Heart left ventricle (tissue), 16 donors: ENCODE measurements at regions of chr11 and their contacts with region 1.

Region 1: DNA sequence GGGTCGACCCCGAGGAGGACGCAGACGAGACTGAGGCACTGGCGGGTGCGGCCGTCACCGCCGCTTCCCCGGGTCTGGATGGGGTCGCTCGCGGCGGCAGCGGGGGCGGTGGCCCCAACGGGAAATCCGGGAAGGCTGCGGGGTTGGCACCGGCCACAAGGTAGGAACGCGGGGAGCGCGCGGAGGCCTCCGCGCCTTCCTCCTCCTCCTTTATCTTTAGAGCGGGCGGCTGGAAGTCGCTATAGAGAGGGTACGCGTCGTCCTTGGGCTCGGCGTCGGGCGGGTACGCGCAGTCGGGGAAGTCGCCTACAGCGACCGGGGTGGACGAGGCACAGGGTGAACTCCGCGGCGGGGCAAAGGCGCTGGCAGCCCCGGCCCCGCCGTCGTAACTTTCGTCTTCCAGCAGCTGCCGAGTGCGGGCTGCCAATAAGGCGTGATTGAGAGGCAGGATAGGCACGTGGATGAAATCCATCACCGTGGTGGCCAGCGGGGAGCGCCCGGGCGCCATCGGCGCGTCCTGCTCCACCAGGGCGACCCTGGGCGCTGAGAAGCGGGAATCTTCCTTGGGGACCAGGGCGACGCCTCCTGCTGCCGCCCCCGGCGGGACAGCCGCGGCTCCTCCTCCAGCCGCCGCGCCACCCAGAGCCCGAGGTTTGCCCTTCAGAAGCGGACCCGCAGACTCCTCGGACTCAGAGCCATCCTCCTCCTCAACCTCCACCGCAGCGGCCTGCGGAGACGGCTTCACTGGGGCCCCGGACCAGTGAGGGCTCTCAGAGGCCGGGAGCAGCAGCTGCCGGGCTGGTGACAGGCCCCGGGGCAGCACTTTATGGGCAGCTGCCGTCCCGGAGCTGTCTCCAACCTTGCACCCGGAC is 1.7 kb downstream of the PGR start:
- DNase-seq: peak; percentile 25 to 74 (median 54)
- ATAC-seq: peak in 3 of 4 donors; percentile 49 to 68 (median 64)
- H3K4me3 ChIP-seq: peak overlapping the region; percentile 49 to 94 (median 78)
- H3K27ac ChIP-seq: peak overlapping the region; percentile 70 to 89 (median 86)
- H3K4me1 ChIP-seq: peaks cover 0 to 31% (median 11%) of the 10 kb centered on the region in 12 donors
- H3K27me3 ChIP-seq: peaks cover 0 to 36% (median 0%) of the 10 kb centered on the region in 9 donors
- CTCF ChIP-seq: peak in 3 of 12 donors; percentile 7 to 24 (median 20)
- POLR2A ChIP-seq: no peak

Region 2: GRCh38 chr11:100827934-100828661 is 299.8 kb before region 1 on chr11:
- intact Hi-C with region 1: loop called in 1 of 10 experiments (anchors 5 kb)
- DNase-seq: no peak
- ATAC-seq: no peak
- H3K4me3 ChIP-seq: no peak overlapping the region
- H3K27ac ChIP-seq: no peak overlapping the region
- H3K4me1 ChIP-seq: peaks cover 0 to 50% (median 23%) of the 10 kb centered on the region in 12 donors
- H3K27me3 ChIP-seq: no peaks in the 10 kb centered on the region
- CTCF ChIP-seq: peak in 1 of 12 donors; percentile 4
- POLR2A ChIP-seq: no peak

Region 3: GRCh38 chr11:100970283-100971164 is 157.4 kb before region 1 on chr11:
- intact Hi-C with region 1: loop called in 2 of 10 experiments (anchors 10 kb)
- DNase-seq: peak in 2 of 5 donors; percentile 7 to 20
- ATAC-seq: peak; percentile 73 to 84 (median 77)
- H3K4me3 ChIP-seq: no peak overlapping the region
- H3K27ac ChIP-seq: peak overlapping the region in 8 of 12 donors; percentile 6 to 60 (median 47)
- H3K4me1 ChIP-seq: peaks cover 0 to 16% (median 4%) of the 10 kb centered on the region in 12 donors
- H3K27me3 ChIP-seq: no peaks in the 10 kb centered on the region
- CTCF ChIP-seq: no peak
- POLR2A ChIP-seq: no peak

Region 4: GRCh38 chr11:100980156-100980555 is 147.8 kb before region 1 on chr11:
- intact Hi-C with region 1: loop called in 3 of 10 experiments (anchors 5 to 10 kb)
- DNase-seq: no peak
- ATAC-seq: no peak
- H3K4me3 ChIP-seq: no peak overlapping the region
- H3K27ac ChIP-seq: no peak overlapping the region
- H3K4me1 ChIP-seq: no peaks in the 10 kb centered on the region
- H3K27me3 ChIP-seq: no peaks in the 10 kb centered on the region
- CTCF ChIP-seq: peak in 11 of 12 donors; percentile 18 to 67 (median 49)
- POLR2A ChIP-seq: no peak

Region 5: GRCh38 chr11:100991541-100991940 is 136.4 kb before region 1 on chr11:
- intact Hi-C with region 1: loop called in 2 of 10 experiments (anchors 10 kb)
- DNase-seq: no peak
- ATAC-seq: no peak
- H3K4me3 ChIP-seq: no peak overlapping the region
- H3K27ac ChIP-seq: no peak overlapping the region
- H3K4me1 ChIP-seq: peaks cover 0 to 10% (median 2%) of the 10 kb centered on the region in 12 donors
- H3K27me3 ChIP-seq: no peaks in the 10 kb centered on the region
- CTCF ChIP-seq: no peak
- POLR2A ChIP-seq: no peak

Region 6: DNA sequence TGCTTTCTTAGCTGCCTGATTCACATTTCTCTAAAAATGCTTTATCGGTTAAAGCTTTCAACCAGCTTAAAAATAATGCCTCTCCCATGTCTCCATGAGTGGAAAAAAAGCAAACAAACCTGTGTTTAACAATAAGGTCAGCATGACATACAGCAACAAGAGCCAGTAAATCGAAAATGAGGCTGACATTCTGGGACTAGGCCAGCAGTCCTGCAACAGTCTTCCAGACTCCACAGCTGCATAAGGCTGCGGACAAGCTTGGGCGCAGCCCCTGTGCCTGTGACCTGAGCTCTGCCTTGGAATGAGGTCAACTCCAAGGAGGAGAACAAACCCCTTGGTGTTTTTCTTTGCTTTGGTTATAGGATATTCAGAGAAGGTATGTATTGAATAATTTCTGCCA is 93.9 kb before region 1 on chr11:
- intact Hi-C with region 1: loop called in 7 of 10 experiments (anchors 2 to 10 kb)
- DNase-seq: peak; percentile 58 to 87 (median 77)
- ATAC-seq: peak; percentile 90 to 96 (median 94)
- H3K4me3 ChIP-seq: peak overlapping the region in 9 of 12 donors; percentile 6 to 50 (median 32)
- H3K27ac ChIP-seq: peak overlapping the region; percentile 47 to 82 (median 66)
- H3K4me1 ChIP-seq: peaks cover 0 to 30% (median 2%) of the 10 kb centered on the region in 12 donors
- H3K27me3 ChIP-seq: no peaks in the 10 kb centered on the region
- CTCF ChIP-seq: no peak
- POLR2A ChIP-seq: no peak

Region 7: GRCh38 chr11:101436511-101437142 is 308.7 kb after region 1 on chr11:
- intact Hi-C with region 1: loop called in 1 of 10 experiments (anchors 10 kb)
- DNase-seq: peak in 2 of 5 donors; percentile 32
- ATAC-seq: peak in 1 of 4 donors; percentile 73
- H3K4me3 ChIP-seq: no peak overlapping the region
- H3K27ac ChIP-seq: no peak overlapping the region
- H3K4me1 ChIP-seq: peaks cover 0 to 7% (median 2%) of the 10 kb centered on the region in 12 donors
- H3K27me3 ChIP-seq: no peaks in the 10 kb centered on the region
- CTCF ChIP-seq: peak; percentile 40 to 70 (median 60)
- POLR2A ChIP-seq: no peak